ENCODE measurements at regions of chr19 and their contacts with region 1.

Region 1: GRCh38 chr19:41795031-41795461 is 1.3 kb upstream of the CEACAM3 start:
- DNase-seq: no peak
- ATAC-seq: peak; percentile 97
- H3K4me3 Mint-ChIP-seq: no peak overlapping the region
- H3K27ac Mint-ChIP-seq: no peak overlapping the region
- H3K4me1 Mint-ChIP-seq: peaks cover 9% of the 10 kb centered on the region
- H3K27me3 Mint-ChIP-seq: peaks cover 17% of the 10 kb centered on the region
- CTCF ChIP-seq: no peak

Region 2: DNA sequence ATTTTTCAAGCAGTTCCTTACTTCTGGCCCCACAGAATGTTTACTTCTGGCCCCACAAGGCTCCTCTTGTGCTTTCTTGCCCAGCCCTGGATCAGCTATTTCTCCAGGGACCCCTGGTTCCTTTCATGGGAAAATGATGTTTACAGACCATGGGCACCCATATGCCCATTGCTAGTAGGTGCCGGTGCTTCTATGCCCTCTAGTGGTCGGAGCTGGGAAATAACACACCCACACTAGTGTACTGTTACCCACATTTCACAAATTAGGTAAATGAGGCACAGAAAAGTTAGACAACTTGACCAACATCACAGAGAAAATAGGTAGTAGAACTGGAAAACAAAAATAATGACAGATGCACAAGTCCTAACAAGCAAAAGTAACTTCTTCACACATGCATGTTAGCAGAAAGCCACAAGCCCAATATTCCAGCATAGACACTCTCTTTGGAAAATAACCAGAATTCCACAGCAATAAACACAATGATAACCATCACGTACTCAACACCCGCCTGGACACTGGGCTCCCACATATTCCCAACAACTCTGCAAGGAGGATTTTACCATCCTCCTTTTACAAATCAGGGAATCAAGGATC is 41.0 kb before region 1 on chr19:
- CTCF ChIA-PET with region 1: interaction called, 21 read pairs
- POLR2A ChIA-PET with region 1: no interaction called
- intact Hi-C with region 1: no loop called
- DNase-seq: peak; percentile 35
- ATAC-seq: peak; percentile 90
- H3K4me3 Mint-ChIP-seq: no peak overlapping the region
- H3K27ac Mint-ChIP-seq: no peak overlapping the region
- H3K4me1 Mint-ChIP-seq: peaks cover 2% of the 10 kb centered on the region
- H3K27me3 Mint-ChIP-seq: peaks cover 13% of the 10 kb centered on the region
- CTCF ChIP-seq: peak; percentile 5

Region 3: DNA sequence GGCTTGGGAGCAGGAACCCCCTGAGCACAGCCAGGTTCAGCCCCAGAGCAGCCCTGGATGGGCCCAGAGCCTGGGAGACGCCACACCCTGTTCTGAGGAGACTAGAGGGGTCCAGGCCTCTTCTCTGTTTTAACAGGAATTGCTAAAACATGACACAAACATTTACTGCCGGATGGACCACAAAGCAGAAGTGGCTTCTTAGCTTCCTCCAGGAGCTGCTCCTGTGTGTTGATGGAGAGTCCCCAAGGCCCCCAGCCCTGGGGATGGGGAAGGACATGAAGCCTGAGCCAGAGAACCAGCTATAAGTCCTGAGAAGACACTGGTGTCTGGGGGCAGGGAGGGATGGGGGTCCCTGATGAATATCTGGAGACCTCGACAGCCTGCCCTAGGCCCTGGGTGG is 16.0 kb after region 1 on chr19:
- CTCF ChIA-PET with region 1: interaction called, 29 read pairs
- POLR2A ChIA-PET with region 1: interaction called, 3 read pairs
- intact Hi-C with region 1: loop called (anchors 2 kb)
- DNase-seq: no peak
- ATAC-seq: no peak
- H3K4me3 Mint-ChIP-seq: no peak overlapping the region
- H3K27ac Mint-ChIP-seq: no peak overlapping the region
- H3K4me1 Mint-ChIP-seq: peaks cover 8% of the 10 kb centered on the region
- H3K27me3 Mint-ChIP-seq: no peaks in the 10 kb centered on the region
- CTCF ChIP-seq: no peak

Region 4: GRCh38 chr19:41837981-41838708 is 43.1 kb after region 1 on chr19:
- CTCF ChIA-PET with region 1: interaction called, 13 read pairs
- POLR2A ChIA-PET with region 1: no interaction called
- intact Hi-C with region 1: loop called (anchors 5 kb)
- DNase-seq: no peak
- ATAC-seq: no peak
- H3K4me3 Mint-ChIP-seq: no peak overlapping the region
- H3K27ac Mint-ChIP-seq: no peak overlapping the region
- H3K4me1 Mint-ChIP-seq: no peaks in the 10 kb centered on the region
- H3K27me3 Mint-ChIP-seq: peaks cover 34% of the 10 kb centered on the region
- CTCF ChIP-seq: no peak

Region 5: GRCh38 chr19:41959056-41960053 is 164.3 kb after region 1 on chr19 and contains the start of gene RABAC1:
- CTCF ChIA-PET with region 1: interaction called, 4 read pairs
- POLR2A ChIA-PET with region 1: no interaction called
- intact Hi-C with region 1: loop called (anchors 1 kb)
- DNase-seq: peak; percentile 79
- ATAC-seq: peak; percentile 91
- H3K4me3 Mint-ChIP-seq: peak within 1 kb of the TSS; percentile 90
- H3K27ac Mint-ChIP-seq: peak within 1 kb of the TSS; percentile 90
- H3K4me1 Mint-ChIP-seq: peaks cover 17% of the 10 kb centered on the region
- H3K27me3 Mint-ChIP-seq: no peaks in the 10 kb centered on the region
- CTCF ChIP-seq: no peak
- total RNA-seq, gene RABAC1: 96.7 and 102 TPM in 2 replicates